Tibial artery (tissue), 4 donors: ENCODE measurements at regions of chr1 and their contacts with region 1.

Region 1: GRCh38 chr1:117758444-117759316 is 152.8 kb downstream of the TENT5C start:
- DNase-seq: peak; percentile 71 to 82
- H3K4me3 ChIP-seq: peak overlapping the region; percentile 45 to 56
- H3K27ac ChIP-seq: peak overlapping the region; percentile 32 to 54
- H3K4me1 ChIP-seq: peaks cover 0 to 16% (median 8%) of the 10 kb centered on the region in 4 donors
- H3K27me3 ChIP-seq: no peaks in the 10 kb centered on the region
- CTCF ChIP-seq: peak; percentile 82 to 85

Region 2: GRCh38 chr1:117512743-117513321 is 245.8 kb before region 1 on chr1:
- intact Hi-C with region 1: loop called (anchors 5 kb)
- DNase-seq: no peak
- H3K4me3 ChIP-seq: no peak overlapping the region
- H3K27ac ChIP-seq: no peak overlapping the region
- H3K4me1 ChIP-seq: no peaks in the 10 kb centered on the region
- H3K27me3 ChIP-seq: no peaks in the 10 kb centered on the region
- CTCF ChIP-seq: peak; percentile 50 to 62

Region 3: DNA sequence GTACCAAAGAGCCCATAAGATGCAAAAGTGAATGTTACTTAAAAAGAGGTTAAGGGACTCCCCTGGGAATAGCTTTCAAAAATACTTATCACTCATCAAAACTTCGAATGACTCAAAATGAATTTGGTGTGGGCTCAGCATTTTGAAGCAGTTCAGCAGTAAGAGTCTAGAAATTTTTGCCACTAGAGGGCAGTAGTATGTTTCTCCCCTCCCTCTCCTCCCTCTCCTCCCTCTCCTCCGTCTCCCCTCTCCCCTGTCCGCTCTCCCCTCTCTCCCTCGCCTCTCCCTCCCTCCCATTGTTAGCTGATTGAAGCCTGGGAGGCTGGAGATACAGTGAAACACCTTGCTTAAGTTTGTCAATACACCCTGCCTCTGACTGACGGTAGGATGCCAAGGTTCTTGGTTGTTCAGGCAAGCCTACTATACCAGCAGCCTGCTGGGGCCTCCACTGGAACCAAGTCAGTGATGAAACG is 223.6 kb before region 1 on chr1:
- intact Hi-C with region 1: loop called (anchors 2 kb)
- DNase-seq: no peak
- H3K4me3 ChIP-seq: no peak overlapping the region
- H3K27ac ChIP-seq: no peak overlapping the region
- H3K4me1 ChIP-seq: no peaks in the 10 kb centered on the region
- H3K27me3 ChIP-seq: peaks cover 0 to 2% of the 10 kb centered on the region in 2 donors
- CTCF ChIP-seq: peak; percentile 63 to 73

Region 4: DNA sequence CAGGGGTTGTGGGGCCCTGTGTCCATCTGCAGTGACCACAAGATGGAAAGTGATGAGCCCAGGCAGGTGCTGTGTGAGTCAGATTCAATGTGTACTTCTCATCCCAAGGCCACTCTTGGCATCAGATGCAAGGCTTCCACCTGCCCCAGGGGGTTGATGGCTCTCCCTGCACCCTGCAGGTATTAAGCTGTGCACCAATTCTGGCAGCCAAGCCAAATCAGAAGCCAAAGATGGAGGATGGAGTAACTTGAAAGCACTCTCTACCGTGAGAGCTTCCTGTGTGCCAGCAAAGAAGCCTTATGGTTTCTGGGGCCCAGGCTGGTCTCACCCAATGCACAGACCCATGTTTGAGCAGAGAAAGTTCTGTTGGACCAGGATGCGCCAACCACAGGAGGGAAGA is 197.1 kb before region 1 on chr1:
- intact Hi-C with region 1: no loop called
- DNase-seq: no peak
- H3K4me3 ChIP-seq: no peak overlapping the region
- H3K27ac ChIP-seq: no peak overlapping the region
- H3K4me1 ChIP-seq: peaks cover 0 to 3% (median 0%) of the 10 kb centered on the region in 4 donors
- H3K27me3 ChIP-seq: no peaks in the 10 kb centered on the region
- CTCF ChIP-seq: no peak

Region 5: GRCh38 chr1:117599286-117600221 is 159.1 kb before region 1 on chr1:
- intact Hi-C with region 1: loop called (anchors 5 kb)
- DNase-seq: peak; percentile 54 to 74
- H3K4me3 ChIP-seq: no peak overlapping the region
- H3K27ac ChIP-seq: no peak overlapping the region
- H3K4me1 ChIP-seq: peaks cover 0 to 10% (median 4%) of the 10 kb centered on the region in 4 donors
- H3K27me3 ChIP-seq: no peaks in the 10 kb centered on the region
- CTCF ChIP-seq: no peak

Region 6: DNA sequence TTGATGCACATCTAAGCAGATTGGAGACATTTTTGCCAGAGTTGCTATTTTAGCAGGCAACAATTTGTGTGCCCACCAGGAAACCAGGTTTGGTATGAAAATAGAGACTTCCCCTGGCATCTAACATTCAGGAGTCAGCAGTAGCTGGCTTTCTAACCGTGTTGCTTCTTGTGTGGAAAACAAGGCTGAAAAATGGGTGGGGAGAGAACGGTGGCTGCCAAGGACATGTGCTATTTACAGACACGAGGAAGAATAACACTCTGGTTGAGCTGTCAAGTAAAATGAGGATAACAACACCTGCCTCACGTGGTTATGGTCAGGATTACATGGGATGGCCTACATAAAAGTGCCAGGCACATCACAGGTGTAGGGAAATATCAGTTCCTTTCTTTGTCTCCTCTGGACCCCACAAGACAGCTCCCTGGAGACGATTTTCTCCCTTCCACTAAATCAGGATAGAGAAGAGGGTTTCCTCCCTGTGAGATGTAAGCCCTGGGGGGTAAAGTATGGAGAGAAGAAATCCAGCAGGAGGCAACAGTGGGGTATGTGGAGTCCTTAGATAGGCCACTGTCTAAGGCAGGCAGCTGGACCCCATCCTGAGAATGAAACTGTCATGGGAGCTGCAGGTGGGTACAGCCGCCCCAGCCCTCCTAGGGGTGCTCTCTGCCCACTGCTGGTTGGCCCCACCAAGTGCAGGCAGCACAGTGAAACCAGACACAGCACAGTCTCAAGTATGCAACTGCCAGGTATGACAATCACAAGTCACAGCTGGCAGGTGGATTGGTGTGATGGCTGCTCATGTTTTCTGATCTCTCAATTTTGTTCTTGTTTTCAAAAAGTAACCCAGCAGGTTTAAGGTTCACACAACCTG is 72.5 kb before region 1 on chr1:
- intact Hi-C with region 1: no loop called
- DNase-seq: no peak
- H3K4me3 ChIP-seq: no peak overlapping the region
- H3K27ac ChIP-seq: peak overlapping the region; percentile 17 to 36
- H3K4me1 ChIP-seq: peaks cover 0 to 52% (median 26%) of the 10 kb centered on the region in 4 donors
- H3K27me3 ChIP-seq: no peaks in the 10 kb centered on the region
- CTCF ChIP-seq: no peak

Region 7: GRCh38 chr1:117770981-117771531 is 12.4 kb after region 1 on chr1:
- intact Hi-C with region 1: no loop called
- DNase-seq: no peak
- H3K4me3 ChIP-seq: no peak overlapping the region
- H3K27ac ChIP-seq: no peak overlapping the region
- H3K4me1 ChIP-seq: no peaks in the 10 kb centered on the region
- H3K27me3 ChIP-seq: no peaks in the 10 kb centered on the region
- CTCF ChIP-seq: no peak

Region 8: DNA sequence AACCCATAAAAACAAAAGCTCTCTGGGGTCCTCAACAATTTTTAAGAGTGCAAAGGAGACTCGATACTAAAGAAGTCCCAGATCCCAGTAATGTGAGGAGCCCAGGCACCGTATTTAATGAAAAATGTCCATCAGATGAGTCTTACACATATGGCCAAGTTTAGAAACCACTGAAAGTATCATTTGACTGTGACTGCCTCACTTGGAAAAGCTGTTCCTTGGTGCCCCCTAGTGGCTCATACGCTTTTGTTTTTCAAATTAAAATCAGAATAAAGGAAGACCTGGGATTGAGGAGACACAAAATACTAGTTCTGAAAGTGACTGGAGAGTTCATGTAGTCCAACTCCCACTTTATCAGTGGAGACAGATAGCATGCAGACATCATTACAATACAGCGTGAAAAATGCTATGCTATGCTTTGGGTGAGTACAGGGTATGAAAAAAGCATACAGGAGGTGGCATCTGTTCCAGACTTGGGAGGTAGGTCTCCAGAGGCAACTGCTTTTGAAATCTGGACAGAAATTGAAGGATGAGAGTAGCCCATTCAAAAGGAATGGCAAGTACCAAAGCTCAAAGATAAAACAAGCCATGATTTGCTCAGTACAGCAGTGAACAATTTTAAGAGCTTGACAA is 136.9 kb after region 1 on chr1:
- intact Hi-C with region 1: loop called (anchors 5 kb)
- DNase-seq: peak; percentile 45 to 70
- H3K4me3 ChIP-seq: no peak overlapping the region
- H3K27ac ChIP-seq: no peak overlapping the region
- H3K4me1 ChIP-seq: no peaks in the 10 kb centered on the region
- H3K27me3 ChIP-seq: no peaks in the 10 kb centered on the region
- CTCF ChIP-seq: peak; percentile 75 to 79

Region 9: DNA sequence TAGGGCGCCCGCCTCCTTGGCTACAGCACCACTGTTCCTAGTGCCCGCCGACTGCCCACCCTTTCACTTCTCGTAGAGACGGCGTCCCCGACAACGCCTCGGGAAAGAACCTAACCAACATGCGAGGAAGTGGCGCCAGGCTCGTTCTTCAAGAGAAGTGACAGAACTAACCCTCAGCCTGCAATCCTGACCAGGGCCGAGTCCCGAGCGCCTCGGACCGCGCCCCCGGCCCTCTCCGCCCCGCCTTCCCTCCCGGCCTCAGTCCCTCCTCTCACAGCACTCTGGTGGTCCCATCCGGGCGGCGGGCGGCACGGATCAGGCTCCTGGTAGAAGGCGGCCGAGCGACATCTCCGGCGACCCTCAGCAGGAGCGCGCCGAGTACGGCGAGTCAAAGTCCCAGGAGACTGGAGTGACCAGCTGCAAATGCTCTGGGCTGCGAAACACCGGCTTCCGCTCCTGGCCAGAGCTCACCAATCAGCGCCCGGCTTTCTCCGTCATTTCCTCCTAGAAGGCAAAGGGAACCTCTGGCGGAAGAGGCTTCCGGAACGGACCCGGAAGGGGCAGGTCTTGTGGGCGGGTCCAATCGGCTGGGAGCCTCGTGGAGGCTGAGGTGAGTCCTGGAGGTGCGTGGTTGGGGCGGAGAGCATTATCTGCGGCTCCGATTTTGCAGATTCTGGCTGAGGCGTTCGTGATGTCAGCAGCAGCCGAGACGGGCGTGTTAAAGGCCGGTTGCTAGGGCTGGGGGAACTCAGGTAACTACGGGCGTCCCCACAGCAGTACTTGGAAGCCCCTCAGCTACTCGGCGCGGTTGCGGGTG is 170.7 kb after region 1 on chr1 and contains the starts of genes GDAP2 and WDR3:
- intact Hi-C with region 1: no loop called
- DNase-seq: peak; percentile 97
- H3K4me3 ChIP-seq: peak within 1 kb of the TSS; percentile 98
- H3K27ac ChIP-seq: peak within 1 kb of the TSS; percentile 89 to 96
- H3K4me1 ChIP-seq: peaks cover 0 to 34% (median 32%) of the 10 kb centered on the region in 4 donors
- H3K27me3 ChIP-seq: no peaks in the 10 kb centered on the region
- CTCF ChIP-seq: no peak